ENCODE measurements at regions of chr13 and their contacts with region 1.

Region 1: GRCh38 chr13:109786457-109787134 is at the start of gene IRS2:
- DNase-seq: peak; percentile 98
- H3K4me3 ChIP-seq: peak within 1 kb of the TSS; percentile 81 to 95 (median 90)
- H3K27ac ChIP-seq: peak within 1 kb of the TSS; percentile 95 to 98 (median 96)
- H3K4me1 ChIP-seq: peaks cover 0 to 60% (median 39%) of the 10 kb centered on the region in 4 donors
- H3K27me3 ChIP-seq: no peaks in the 10 kb centered on the region
- CTCF ChIP-seq: no peak
- EP300 ChIP-seq: peak in 1 of 4 donors; percentile 3
- POLR2A ChIP-seq: peak; percentile 50 to 64
- total RNA-seq, gene IRS2: 15.3 to 21.9 (median 20.3) TPM

Region 2: GRCh38 chr13:108915634-108916512 is 870.7 kb before region 1 on chr13:
- intact Hi-C with region 1: loop called (anchors 5 kb)
- DNase-seq: peak; percentile 98
- H3K4me3 ChIP-seq: peak overlapping the region in 3 of 4 donors; percentile 20 to 34 (median 25)
- H3K27ac ChIP-seq: peak overlapping the region; percentile 73 to 87 (median 80)
- H3K4me1 ChIP-seq: peaks cover 0 to 39% (median 25%) of the 10 kb centered on the region in 4 donors
- H3K27me3 ChIP-seq: no peaks in the 10 kb centered on the region
- CTCF ChIP-seq: no peak
- EP300 ChIP-seq: peak in 3 of 4 donors; percentile 77 to 98 (median 82)
- POLR2A ChIP-seq: no peak

Region 3: GRCh38 chr13:109145631-109146030 is 641.0 kb before region 1 on chr13:
- intact Hi-C with region 1: loop called (anchors 1 kb)
- DNase-seq: no peak
- H3K4me3 ChIP-seq: no peak overlapping the region
- H3K27ac ChIP-seq: peak overlapping the region in 2 of 4 donors; percentile 55 to 69
- H3K4me1 ChIP-seq: peaks cover 0 to 28% (median 24%) of the 10 kb centered on the region in 4 donors
- H3K27me3 ChIP-seq: peaks cover 2 to 8% (median 8%) of the 10 kb centered on the region in 3 donors
- CTCF ChIP-seq: peak; percentile 49 to 77 (median 67)
- EP300 ChIP-seq: no peak
- POLR2A ChIP-seq: no peak

Region 4: DNA sequence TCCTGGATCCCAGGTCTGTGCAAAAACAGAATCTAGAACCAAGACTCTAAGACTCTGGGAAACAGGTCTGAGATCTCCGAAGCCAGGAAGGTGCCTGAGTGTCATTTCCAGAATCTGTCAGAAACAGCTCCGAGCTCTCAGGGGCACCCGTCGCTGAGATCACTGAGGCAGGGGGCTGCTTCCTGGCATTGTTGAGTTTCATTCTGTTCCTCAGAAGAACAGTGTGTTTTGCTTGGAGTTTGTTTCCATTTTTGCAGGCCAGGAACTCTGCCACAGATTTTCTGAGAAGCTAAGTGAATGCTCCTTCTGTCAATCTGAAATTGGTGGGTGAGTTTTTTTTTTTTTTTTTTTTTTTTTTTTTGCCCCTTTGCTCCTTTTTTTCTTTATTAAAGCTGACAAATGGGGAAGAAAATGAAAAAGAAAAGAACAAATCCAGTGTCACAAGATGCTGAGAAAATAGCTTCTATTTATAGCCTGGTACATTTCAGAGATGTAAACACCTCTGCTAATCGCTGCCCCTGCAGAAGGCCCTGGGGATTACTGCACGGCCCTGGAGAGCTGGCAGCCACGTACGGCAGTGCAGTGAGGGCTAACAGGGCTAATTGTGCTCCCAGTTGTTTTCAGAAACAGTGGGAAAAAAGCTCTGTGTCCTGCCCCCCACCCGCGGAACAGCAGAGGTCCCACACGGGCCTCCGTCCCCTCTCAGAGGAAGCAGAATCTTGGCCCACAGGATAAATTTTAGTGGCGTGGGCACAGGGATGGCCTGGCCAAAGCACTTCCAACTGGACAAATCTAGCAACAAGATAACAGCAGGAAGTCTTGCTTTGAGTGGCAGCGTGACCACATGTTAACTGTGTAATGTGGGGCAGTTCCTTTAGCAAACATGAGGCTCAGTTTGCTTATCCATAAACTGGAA is 237.4 kb after region 1 on chr13:
- intact Hi-C with region 1: loop called (anchors 5 kb)
- DNase-seq: peak; percentile 85
- H3K4me3 ChIP-seq: no peak overlapping the region
- H3K27ac ChIP-seq: peak overlapping the region; percentile 74 to 86 (median 80)
- H3K4me1 ChIP-seq: peaks cover 0 to 21% (median 19%) of the 10 kb centered on the region in 4 donors
- H3K27me3 ChIP-seq: no peaks in the 10 kb centered on the region
- CTCF ChIP-seq: no peak
- EP300 ChIP-seq: peak; percentile 33 to 76 (median 64)
- POLR2A ChIP-seq: no peak

Region 5: GRCh38 chr13:110089100-110089499 is 302.5 kb after region 1 on chr13:
- intact Hi-C with region 1: no loop called
- DNase-seq: no peak
- H3K4me3 ChIP-seq: no peak overlapping the region
- H3K27ac ChIP-seq: no peak overlapping the region
- H3K4me1 ChIP-seq: peaks cover 0 to 17% (median 10%) of the 10 kb centered on the region in 4 donors
- H3K27me3 ChIP-seq: no peaks in the 10 kb centered on the region
- CTCF ChIP-seq: no peak
- EP300 ChIP-seq: no peak
- POLR2A ChIP-seq: no peak

Region 6: DNA sequence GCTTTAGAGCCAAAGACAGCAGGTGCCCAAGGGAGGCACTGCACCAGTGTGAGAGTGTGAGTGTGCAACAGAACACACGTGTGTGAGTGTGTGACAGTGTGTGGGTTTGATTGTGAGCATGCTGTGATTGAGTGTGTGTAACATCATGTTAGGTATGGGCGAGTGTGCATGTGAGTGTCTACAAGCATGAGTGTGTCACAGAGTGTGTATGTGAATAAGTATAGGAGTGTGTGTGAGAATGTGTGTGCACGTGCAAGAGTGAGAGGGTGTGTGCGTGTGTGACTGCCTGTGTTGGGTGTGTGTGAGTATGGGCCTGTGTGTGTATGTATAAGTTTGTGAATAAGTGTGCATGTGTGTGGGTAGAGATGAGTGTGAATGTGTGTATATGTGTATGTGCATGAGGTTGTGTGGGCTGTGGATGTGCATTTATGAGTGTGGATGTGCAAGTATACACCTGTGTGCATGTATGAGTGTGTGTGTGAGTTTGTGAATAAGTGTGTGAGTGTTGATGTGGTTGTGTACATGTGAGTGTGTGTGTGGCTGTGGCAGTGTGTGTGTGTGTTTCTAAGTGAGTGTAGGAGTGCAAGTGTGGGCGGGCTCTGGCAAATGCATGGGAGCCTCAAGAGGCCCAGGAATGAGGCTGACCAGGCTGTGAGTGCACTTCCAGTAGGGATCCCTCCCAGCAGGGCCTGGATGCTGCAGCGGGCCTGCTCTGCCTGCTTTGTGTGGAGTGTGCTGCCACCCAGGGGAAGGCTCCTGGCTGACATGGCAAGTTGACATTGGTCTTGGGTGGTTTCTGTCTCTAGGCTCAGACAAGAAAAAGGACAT is 322.0 kb after region 1 on chr13:
- intact Hi-C with region 1: loop called (anchors 1 kb)
- DNase-seq: peak; percentile 93
- H3K4me3 ChIP-seq: no peak overlapping the region
- H3K27ac ChIP-seq: peak overlapping the region; percentile 77 to 86 (median 84)
- H3K4me1 ChIP-seq: peaks cover 3 to 49% (median 40%) of the 10 kb centered on the region in 4 donors
- H3K27me3 ChIP-seq: no peaks in the 10 kb centered on the region
- CTCF ChIP-seq: peak; percentile 64 to 84 (median 77)
- EP300 ChIP-seq: no peak
- POLR2A ChIP-seq: no peak